CD4-positive, alpha-beta T cell (primary cell): ENCODE measurements at regions of chr2 and their contacts with region 1.

Region 1: DNA sequence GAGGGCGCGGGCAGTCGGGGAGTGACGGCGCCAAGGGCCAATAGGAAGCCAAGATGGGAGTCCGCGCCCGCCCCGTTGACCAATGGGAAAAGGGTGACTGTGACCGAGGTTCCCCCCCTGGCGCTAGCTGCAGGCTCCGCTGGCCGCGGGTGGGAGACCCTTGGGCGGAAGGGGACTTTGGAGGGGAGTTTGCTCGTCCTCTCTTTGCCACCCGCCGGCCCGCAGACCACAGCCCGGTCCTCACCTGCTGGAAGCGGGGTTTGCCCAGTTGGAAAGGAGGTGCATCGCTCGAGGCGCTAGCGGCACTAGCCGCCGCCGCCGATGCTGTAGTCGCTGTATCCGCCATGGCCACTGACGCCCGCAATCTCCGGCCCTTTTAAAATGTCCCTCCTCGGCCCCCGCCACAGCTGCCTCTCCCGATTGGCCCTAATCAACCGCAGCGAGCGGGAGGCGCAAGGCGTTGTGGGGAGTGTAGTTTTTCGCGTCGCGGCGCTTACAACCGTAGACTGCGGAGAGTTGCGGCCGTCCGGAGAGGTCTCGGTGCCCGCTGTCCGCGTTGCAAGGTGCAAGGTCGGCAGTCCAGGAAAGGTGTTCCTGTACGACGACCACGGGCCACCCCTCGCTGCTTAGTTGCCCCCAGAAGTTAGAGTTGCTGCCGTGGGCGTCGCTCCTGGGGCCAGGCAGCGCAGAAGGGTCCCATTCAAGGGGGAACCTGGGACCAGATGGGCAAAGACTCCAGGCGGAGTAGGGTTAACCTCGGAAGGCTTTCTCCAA is at the start of gene SFXN5:
- DNase-seq: peak; percentile 87 to 96 (median 92)
- ATAC-seq: peak; percentile 84
- H3K4me3 ChIP-seq: peak within 1 kb of the TSS; percentile 84
- H3K4me3 Mint-ChIP-seq: peak within 1 kb of the TSS; percentile 99
- H3K27ac ChIP-seq: peak within 1 kb of the TSS; percentile 81 to 86
- H3K27ac Mint-ChIP-seq: peak within 1 kb of the TSS; percentile 91
- H3K4me1 ChIP-seq: peaks cover 21% of the 10 kb centered on the region
- H3K4me1 Mint-ChIP-seq: peaks cover 31% of the 10 kb centered on the region
- H3K27me3 ChIP-seq: no peaks in the 10 kb centered on the region
- H3K27me3 Mint-ChIP-seq: no peaks in the 10 kb centered on the region
- CTCF ChIP-seq: no peak
- total RNA-seq, gene SFXN5: 5.1 to 5.4 TPM

Region 2: GRCh38 chr2:72825241-72826155 is 246.0 kb before region 1 on chr2 and contains the start of gene EXOC6B:
- CTCF ChIA-PET with region 1: no interaction called
- POLR2A ChIA-PET with region 1: no interaction called
- intact Hi-C with region 1: loop called in 1 of 2 experiments (anchors 5 kb)
- DNase-seq: peak; percentile 64 to 92 (median 86)
- ATAC-seq: peak; percentile 90
- H3K4me3 ChIP-seq: peak within 1 kb of the TSS; percentile 74
- H3K4me3 Mint-ChIP-seq: peak within 1 kb of the TSS; percentile 94
- H3K27ac ChIP-seq: no peak within 1 kb of the TSS
- H3K27ac Mint-ChIP-seq: peak within 1 kb of the TSS; percentile 78
- H3K4me1 ChIP-seq: peaks cover 12% of the 10 kb centered on the region
- H3K4me1 Mint-ChIP-seq: peaks cover 48% of the 10 kb centered on the region
- H3K27me3 ChIP-seq: peaks cover 0 to 4% of the 10 kb centered on the region in 2 experiments
- H3K27me3 Mint-ChIP-seq: peaks cover 8% of the 10 kb centered on the region
- CTCF ChIP-seq: no peak
- total RNA-seq, gene EXOC6B: 16.9 to 17.5 TPM

Region 3: GRCh38 chr2:72993147-72993932 is 78.2 kb before region 1 on chr2:
- CTCF ChIA-PET with region 1: no interaction called
- POLR2A ChIA-PET with region 1: no interaction called
- intact Hi-C with region 1: loop called in 1 of 2 experiments (anchors 5 kb)
- DNase-seq: peak in 12 of 14 experiments; percentile 6 to 76 (median 36)
- ATAC-seq: peak; percentile 49
- H3K4me3 ChIP-seq: no peak overlapping the region
- H3K4me3 Mint-ChIP-seq: no peak overlapping the region
- H3K27ac ChIP-seq: no peak overlapping the region
- H3K27ac Mint-ChIP-seq: no peak overlapping the region
- H3K4me1 ChIP-seq: no peaks in the 10 kb centered on the region
- H3K4me1 Mint-ChIP-seq: no peaks in the 10 kb centered on the region
- H3K27me3 ChIP-seq: no peaks in the 10 kb centered on the region
- H3K27me3 Mint-ChIP-seq: no peaks in the 10 kb centered on the region
- CTCF ChIP-seq: peak; percentile 88

Region 4: GRCh38 chr2:73112913-73113633 is 41.5 kb after region 1 on chr2 and contains the start of gene RAB11FIP5:
- CTCF ChIA-PET with region 1: no interaction called
- POLR2A ChIA-PET with region 1: interaction called, 16 read pairs
- intact Hi-C with region 1: loop called (anchors 1 to 5 kb)
- DNase-seq: peak; percentile 58 to 93 (median 75)
- ATAC-seq: peak; percentile 90
- H3K4me3 ChIP-seq: peak within 1 kb of the TSS; percentile 84
- H3K4me3 Mint-ChIP-seq: peak within 1 kb of the TSS; percentile 86
- H3K27ac ChIP-seq: peak within 1 kb of the TSS in 1 of 2 donors; percentile 21
- H3K27ac Mint-ChIP-seq: peak within 1 kb of the TSS; percentile 65
- H3K4me1 ChIP-seq: peaks cover 35% of the 10 kb centered on the region
- H3K4me1 Mint-ChIP-seq: peaks cover 27% of the 10 kb centered on the region
- H3K27me3 ChIP-seq: no peaks in the 10 kb centered on the region
- H3K27me3 Mint-ChIP-seq: no peaks in the 10 kb centered on the region
- CTCF ChIP-seq: no peak
- total RNA-seq, gene RAB11FIP5: 12.6 to 13.8 TPM

Region 5: GRCh38 chr2:73284296-73285158 is 213.0 kb after region 1 on chr2 and contains the start of gene FBXO41:
- CTCF ChIA-PET with region 1: no interaction called
- POLR2A ChIA-PET with region 1: no interaction called
- intact Hi-C with region 1: loop called in 1 of 2 experiments (anchors 5 kb)
- DNase-seq: peak; percentile 36 to 79 (median 59)
- ATAC-seq: peak; percentile 79
- H3K4me3 ChIP-seq: peak within 1 kb of the TSS; percentile 73
- H3K4me3 Mint-ChIP-seq: peak within 1 kb of the TSS; percentile 91
- H3K27ac ChIP-seq: peak within 1 kb of the TSS in 1 of 2 donors; percentile 33
- H3K27ac Mint-ChIP-seq: peak within 1 kb of the TSS; percentile 37
- H3K4me1 ChIP-seq: peaks cover 22% of the 10 kb centered on the region
- H3K4me1 Mint-ChIP-seq: peaks cover 22% of the 10 kb centered on the region
- H3K27me3 ChIP-seq: no peaks in the 10 kb centered on the region
- H3K27me3 Mint-ChIP-seq: peaks cover 15% of the 10 kb centered on the region
- CTCF ChIP-seq: no peak
- total RNA-seq, gene FBXO41: 14.0 to 16.0 TPM

Region 6: DNA sequence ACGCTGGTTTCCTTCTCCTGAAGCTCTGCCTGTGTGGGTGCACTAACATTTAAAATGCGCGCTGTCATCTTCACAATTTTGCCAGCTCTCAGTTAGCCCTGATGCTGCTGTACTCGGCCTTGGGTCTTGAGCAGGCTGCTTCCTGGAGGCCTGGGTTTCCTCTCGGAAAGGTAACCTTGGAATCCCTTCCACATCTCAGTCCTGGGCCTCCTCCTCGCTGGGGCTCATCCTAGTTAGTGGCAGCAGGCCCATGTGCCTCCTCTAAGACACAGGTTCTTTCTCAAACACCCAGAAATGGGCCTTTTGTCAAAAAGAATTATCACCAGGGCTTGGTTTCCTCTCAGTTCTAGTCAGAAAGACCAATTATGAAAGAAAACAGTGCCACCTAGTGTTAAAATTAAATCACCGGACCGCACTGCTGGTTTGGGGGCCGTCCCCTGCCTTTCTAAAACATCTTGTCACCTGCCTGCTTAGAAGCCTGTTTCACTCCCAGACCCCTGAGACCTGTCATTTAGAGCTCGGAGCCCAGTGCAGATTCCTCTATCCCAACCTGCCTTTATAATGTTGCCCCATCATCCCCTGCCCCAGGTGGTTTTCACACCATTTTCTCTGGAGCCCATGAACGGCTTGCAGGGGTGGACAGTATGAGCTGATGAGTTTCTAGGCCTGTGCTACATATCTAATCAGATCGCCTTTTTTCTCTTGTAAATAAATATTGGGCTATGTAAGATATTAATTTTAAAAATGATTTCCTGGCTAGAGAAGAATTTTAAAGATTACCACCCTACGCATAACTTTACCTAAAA is 1804.7 kb after region 1 on chr2:
- CTCF ChIA-PET with region 1: no interaction called
- POLR2A ChIA-PET with region 1: no interaction called
- intact Hi-C with region 1: no loop called
- DNase-seq: peak; percentile 6 to 79 (median 34)
- ATAC-seq: peak; percentile 80
- H3K4me3 ChIP-seq: no peak overlapping the region
- H3K4me3 Mint-ChIP-seq: no peak overlapping the region
- H3K27ac ChIP-seq: no peak overlapping the region
- H3K27ac Mint-ChIP-seq: no peak overlapping the region
- H3K4me1 ChIP-seq: peaks cover 6% of the 10 kb centered on the region
- H3K4me1 Mint-ChIP-seq: peaks cover 7% of the 10 kb centered on the region
- H3K27me3 ChIP-seq: no peaks in the 10 kb centered on the region
- H3K27me3 Mint-ChIP-seq: no peaks in the 10 kb centered on the region
- CTCF ChIP-seq: peak; percentile 72